ENCODE measurements at regions of chr3 and their contacts with region 1.

Region 1: GRCh38 chr3:25594007-25594502 is 70.7 kb downstream of the TOP2B start:
- DNase-seq: peak; percentile 64
- H3K4me3 ChIP-seq: peak overlapping the region in 1 of 2 experiments; percentile 20; a peak in 1 of 4 replicates
- H3K27ac ChIP-seq: peak overlapping the region; percentile 47 to 70
- H3K4me1 ChIP-seq: peaks cover 14 to 26% of the 10 kb centered on the region in 2 experiments
- H3K27me3 ChIP-seq: no peaks in the 10 kb centered on the region
- CTCF ChIP-seq: peak; percentile 96
- EP300 ChIP-seq: no peak; a peak in 1 of 4 replicates
- RAD21 ChIP-seq: peak; percentile 87

Region 2: DNA sequence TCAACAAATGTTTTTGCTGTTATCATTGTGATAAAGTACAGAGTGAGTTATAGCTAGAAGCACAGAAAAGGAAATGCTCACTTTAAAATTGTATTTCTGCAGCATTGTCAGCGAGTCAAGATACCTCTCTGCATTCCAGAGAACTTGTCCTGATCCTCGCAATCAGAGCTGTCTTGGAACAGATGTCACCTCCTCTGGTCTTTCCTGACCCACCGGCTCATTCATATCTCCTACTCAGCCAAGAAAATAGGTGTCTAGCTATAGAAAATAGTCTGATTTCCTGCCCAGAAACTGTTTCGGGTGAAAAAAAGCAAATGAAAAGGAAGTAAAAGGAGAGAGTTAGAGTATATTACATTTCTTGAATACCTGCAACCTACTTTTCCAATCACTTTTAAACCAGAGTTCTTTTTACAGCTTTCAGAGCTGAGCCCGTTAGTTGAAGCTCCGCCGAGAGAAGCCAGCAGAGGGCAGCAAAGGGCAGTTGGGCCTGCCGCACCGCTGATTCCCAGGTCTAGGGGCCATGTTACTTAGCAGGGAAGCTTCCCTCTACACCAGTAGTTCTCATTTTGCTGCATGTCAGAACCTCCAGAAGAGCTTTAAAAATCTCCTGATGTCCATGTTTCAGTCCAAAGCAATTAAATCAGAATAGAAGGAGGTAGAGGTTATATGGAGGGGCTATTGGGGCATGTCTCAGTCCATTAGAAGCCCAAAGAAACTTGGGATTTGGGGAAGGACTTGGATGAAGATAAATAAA is 913.7 kb before region 1 on chr3:
- CTCF ChIA-PET with region 1: interaction called, 10 read pairs
- POLR2A ChIA-PET with region 1: no interaction called
- DNase-seq: peak; percentile 59
- H3K4me3 ChIP-seq: no peak overlapping the region; a peak in 1 of 4 replicates
- H3K27ac ChIP-seq: no peak overlapping the region
- H3K4me1 ChIP-seq: no peaks in the 10 kb centered on the region; a peak in 1 of 4 replicates
- H3K27me3 ChIP-seq: no peaks in the 10 kb centered on the region
- CTCF ChIP-seq: peak; percentile 85
- EP300 ChIP-seq: no peak
- RAD21 ChIP-seq: peak; percentile 66

Region 3: GRCh38 chr3:24963762-24964625 is 630.1 kb before region 1 on chr3:
- CTCF ChIA-PET with region 1: interaction called, 22 read pairs
- POLR2A ChIA-PET with region 1: no interaction called
- DNase-seq: peak; percentile 10
- H3K4me3 ChIP-seq: no peak overlapping the region; a peak in 1 of 4 replicates
- H3K27ac ChIP-seq: no peak overlapping the region
- H3K4me1 ChIP-seq: no peaks in the 10 kb centered on the region; a peak in 1 of 4 replicates
- H3K27me3 ChIP-seq: no peaks in the 10 kb centered on the region
- CTCF ChIP-seq: peak; percentile 76
- EP300 ChIP-seq: no peak
- RAD21 ChIP-seq: peak; percentile 82

Region 4: DNA sequence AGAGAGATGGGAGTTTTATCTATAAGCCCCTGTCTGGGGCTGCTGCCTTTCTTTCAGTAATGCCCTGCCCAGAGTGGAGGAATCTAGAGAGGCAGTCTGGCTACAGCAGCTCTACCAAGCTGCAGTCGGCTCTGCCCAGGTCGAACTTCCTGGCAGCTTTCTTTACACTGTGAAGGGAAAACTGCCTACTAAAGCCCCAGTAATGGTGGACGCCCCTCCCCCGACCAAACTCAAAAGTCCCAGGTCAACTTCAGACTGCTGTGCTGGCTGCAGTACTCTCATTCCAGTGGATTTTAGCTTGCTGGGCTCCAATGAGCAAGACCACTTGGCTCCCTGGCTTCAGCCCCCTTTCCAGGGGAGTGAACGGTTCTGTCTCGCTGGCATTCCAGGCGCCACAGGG is 231.9 kb before region 1 on chr3:
- CTCF ChIA-PET with region 1: no interaction called
- POLR2A ChIA-PET with region 1: no interaction called
- DNase-seq: no peak
- H3K4me3 ChIP-seq: no peak overlapping the region
- H3K27ac ChIP-seq: no peak overlapping the region
- H3K4me1 ChIP-seq: no peaks in the 10 kb centered on the region
- H3K27me3 ChIP-seq: no peaks in the 10 kb centered on the region
- CTCF ChIP-seq: no peak
- EP300 ChIP-seq: no peak
- RAD21 ChIP-seq: no peak

Region 5: GRCh38 chr3:25372167-25372566 is 221.9 kb before region 1 on chr3:
- CTCF ChIA-PET with region 1: no interaction called
- POLR2A ChIA-PET with region 1: no interaction called
- DNase-seq: no peak
- H3K4me3 ChIP-seq: no peak overlapping the region
- H3K27ac ChIP-seq: no peak overlapping the region
- H3K4me1 ChIP-seq: peaks cover 0 to 2% of the 10 kb centered on the region in 2 experiments; a peak in 1 of 4 replicates
- H3K27me3 ChIP-seq: no peaks in the 10 kb centered on the region; the same call in 1 of the 2 replicates
- CTCF ChIP-seq: no peak
- EP300 ChIP-seq: no peak
- RAD21 ChIP-seq: no peak

Region 6: DNA sequence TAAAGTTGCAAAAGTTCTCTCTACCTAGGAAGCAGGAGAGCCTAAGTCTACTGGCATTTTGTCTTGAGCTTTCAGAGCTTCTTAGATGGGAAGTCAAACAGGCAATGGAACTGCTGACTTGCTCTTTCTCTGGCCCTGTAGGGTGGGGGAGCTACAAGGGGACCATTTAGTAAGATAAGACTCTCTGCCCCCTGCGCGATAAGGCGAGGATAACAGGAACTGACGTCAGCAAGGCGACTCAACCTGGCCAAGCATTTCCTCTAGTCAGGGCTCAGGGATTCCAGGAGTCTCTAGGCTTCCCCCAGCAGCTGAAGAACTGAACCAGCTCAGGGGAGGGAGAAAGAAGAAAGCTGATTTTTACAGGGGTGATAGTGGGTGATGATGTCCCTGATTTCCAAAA is 160.2 kb before region 1 on chr3:
- CTCF ChIA-PET with region 1: interaction called, 40 read pairs
- POLR2A ChIA-PET with region 1: no interaction called
- DNase-seq: no peak
- H3K4me3 ChIP-seq: peak overlapping the region in 1 of 2 experiments; percentile 41; a peak in 1 of 4 replicates
- H3K27ac ChIP-seq: peak overlapping the region; percentile 30 to 44; a peak in 3 of 4 replicates
- H3K4me1 ChIP-seq: peaks cover 12 to 17% of the 10 kb centered on the region in 2 experiments; a peak in 3 of 4 replicates
- H3K27me3 ChIP-seq: no peaks in the 10 kb centered on the region
- CTCF ChIP-seq: no peak
- EP300 ChIP-seq: no peak
- RAD21 ChIP-seq: no peak

Region 7: DNA sequence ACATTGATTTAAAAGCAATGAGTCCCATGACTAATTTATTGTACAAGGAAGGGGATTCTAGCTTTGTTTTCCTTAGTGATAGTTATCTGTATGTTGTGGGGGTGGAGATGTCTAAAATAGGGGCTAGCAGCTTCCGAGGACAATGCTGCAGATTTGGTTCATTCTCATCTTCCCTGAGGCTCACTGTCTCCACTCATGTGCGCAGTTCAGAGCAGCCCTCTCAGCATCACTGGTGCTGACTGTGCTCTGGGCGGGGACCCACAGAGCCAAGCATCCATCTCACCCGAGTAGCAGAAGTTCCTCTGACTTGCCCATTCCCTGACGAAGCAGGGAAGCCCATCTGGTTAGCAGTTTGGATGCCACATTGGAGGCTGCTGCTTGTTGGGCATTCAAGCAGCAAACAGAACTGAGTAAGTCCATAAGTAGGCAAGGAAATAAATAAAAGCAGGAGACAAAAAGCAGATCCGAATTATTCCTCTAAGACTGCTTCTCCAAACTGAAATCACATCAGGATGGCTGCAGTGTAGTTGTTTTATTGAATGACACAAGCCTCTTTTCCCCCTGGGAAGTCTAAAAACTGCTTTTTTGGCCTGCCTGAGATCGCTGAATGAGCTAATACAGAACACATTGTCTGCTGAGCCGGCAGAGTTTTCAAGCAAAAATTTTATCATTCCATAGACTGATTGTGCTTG is 138.5 kb before region 1 on chr3:
- CTCF ChIA-PET with region 1: interaction called, 20 read pairs
- POLR2A ChIA-PET with region 1: no interaction called
- DNase-seq: peak; percentile 46
- H3K4me3 ChIP-seq: peak overlapping the region in 1 of 2 experiments; percentile 48; a peak in 2 of 4 replicates
- H3K27ac ChIP-seq: peak overlapping the region; percentile 90 to 99
- H3K4me1 ChIP-seq: peaks cover 53 to 63% of the 10 kb centered on the region in 2 experiments
- H3K27me3 ChIP-seq: no peaks in the 10 kb centered on the region
- CTCF ChIP-seq: no peak
- EP300 ChIP-seq: peak in 1 of 2 experiments; percentile 18; a peak in 2 of 4 replicates
- RAD21 ChIP-seq: peak; percentile 21

Region 8: DNA sequence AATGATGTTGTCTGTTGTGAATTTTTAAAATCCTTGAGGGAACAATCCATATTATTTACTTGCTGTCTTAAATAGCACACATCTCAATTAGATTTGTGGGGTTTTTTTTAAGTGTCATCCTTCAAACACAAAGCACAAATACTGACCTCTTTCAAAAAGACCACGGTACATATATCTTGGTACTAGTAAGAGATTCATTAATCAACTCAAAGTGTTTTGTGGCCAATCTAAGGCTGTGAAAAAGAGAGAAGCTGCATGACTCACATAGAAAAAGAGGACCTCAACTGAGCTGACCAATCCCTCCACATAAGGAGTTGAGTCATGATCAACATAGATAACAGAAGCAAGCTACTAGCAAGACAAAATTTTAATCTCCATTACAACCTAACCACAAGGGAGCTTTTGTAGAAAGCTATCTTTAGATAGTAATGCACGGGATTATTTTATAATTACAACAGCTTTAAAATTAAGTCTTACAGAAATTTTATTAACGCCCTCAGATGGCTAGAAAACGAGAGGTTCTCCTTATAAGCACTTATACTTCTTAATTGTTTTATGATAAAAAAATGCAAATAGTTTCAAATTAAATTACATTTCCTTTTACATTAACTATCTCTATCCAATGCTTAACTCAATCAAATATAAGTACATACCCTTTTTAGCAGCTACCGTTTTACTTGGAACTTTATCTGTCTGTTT is 10.2 kb after region 1 on chr3:
- CTCF ChIA-PET with region 1: interaction called, 24 read pairs
- POLR2A ChIA-PET with region 1: no interaction called
- DNase-seq: no peak
- H3K4me3 ChIP-seq: no peak overlapping the region
- H3K27ac ChIP-seq: peak overlapping the region in 1 of 2 experiments; percentile 57
- H3K4me1 ChIP-seq: peaks cover 3 to 7% of the 10 kb centered on the region in 2 experiments
- H3K27me3 ChIP-seq: no peaks in the 10 kb centered on the region
- CTCF ChIP-seq: no peak
- EP300 ChIP-seq: no peak
- RAD21 ChIP-seq: no peak